ENCODE measurements at regions of chr17 and their contacts with region 1.

Region 1: GRCh38 chr17:44199553-44200477 is at the start of gene ATXN7L3:
- DNase-seq: peak; percentile 100
- H3K4me3 Mint-ChIP-seq: peak within 1 kb of the TSS; percentile 91
- H3K27ac Mint-ChIP-seq: peak within 1 kb of the TSS; percentile 92
- H3K4me1 Mint-ChIP-seq: peaks cover 41% of the 10 kb centered on the region
- H3K27me3 Mint-ChIP-seq: no peaks in the 10 kb centered on the region
- total RNA-seq, gene ATXN7L3: 63.4 to 69.7 TPM

Region 2: GRCh38 chr17:44014437-44015172 is 185.2 kb before region 1 on chr17 and contains the start of gene TMEM101:
- CTCF ChIA-PET with region 1: no interaction called
- POLR2A ChIA-PET with region 1: no interaction called
- intact Hi-C with region 1: no loop called
- DNase-seq: peak; percentile 92
- H3K4me3 Mint-ChIP-seq: peak within 1 kb of the TSS; percentile 100
- H3K27ac Mint-ChIP-seq: peak within 1 kb of the TSS; percentile 79
- H3K4me1 Mint-ChIP-seq: peaks cover 18% of the 10 kb centered on the region
- H3K27me3 Mint-ChIP-seq: no peaks in the 10 kb centered on the region
- total RNA-seq, gene TMEM101: 27.6 to 28.2 TPM

Region 3: GRCh38 chr17:44344939-44345453 is 145.2 kb after region 1 on chr17 and contains the start of gene GRN:
- CTCF ChIA-PET with region 1: interaction called, 17 read pairs
- POLR2A ChIA-PET with region 1: no interaction called
- intact Hi-C with region 1: no loop called
- DNase-seq: peak; percentile 93
- H3K4me3 Mint-ChIP-seq: peak within 1 kb of the TSS; percentile 82
- H3K27ac Mint-ChIP-seq: peak within 1 kb of the TSS; percentile 66
- H3K4me1 Mint-ChIP-seq: peaks cover 21% of the 10 kb centered on the region
- H3K27me3 Mint-ChIP-seq: no peaks in the 10 kb centered on the region
- total RNA-seq, gene GRN: 59.7 to 62.4 TPM

Measured in activated CD4-positive, alpha-beta memory T cell treated with anti-CD3 and anti-CD28 coated beads for 36 hours (primary cell).